ENCODE measurements at regions of chr10 and their contacts with region 1.

Region 1: DNA sequence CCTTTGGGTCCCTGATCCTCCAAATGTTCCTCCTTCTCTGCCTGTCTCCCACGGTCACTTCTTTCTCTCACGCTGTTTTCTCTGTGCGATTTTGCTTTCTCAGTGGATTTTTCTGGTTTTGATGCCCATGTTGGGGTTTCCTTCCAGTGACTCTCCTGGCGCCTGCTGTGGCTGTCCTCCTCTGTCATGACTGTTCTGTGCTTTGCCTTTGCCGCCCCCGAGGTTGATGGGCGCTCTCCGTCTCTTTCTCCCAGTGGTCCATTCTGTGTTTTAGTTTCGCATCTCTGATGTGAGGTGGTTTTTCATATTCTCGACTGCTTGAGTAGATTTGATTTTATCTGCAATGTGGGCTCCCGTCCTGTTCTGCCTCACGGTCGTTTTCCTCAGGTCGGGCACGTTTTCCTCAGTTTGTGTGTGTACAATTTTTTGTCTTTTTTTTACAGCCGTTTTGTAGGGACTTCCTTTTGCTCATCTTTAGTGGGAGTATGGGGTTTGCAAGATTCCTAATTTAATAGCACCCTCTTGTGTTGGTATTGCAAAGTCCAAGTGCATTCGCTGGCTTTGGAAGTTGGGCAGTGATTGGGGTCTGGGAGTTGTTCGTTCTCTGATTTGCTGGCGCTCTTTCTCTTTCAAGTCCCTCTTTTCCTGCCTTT is 100.0 kb downstream of the INPP5A start:
- DNase-seq: peak in 1 of 2 donors; percentile 72
- ATAC-seq: peak; percentile 65 to 84 (median 79)
- H3K4me3 ChIP-seq: no peak overlapping the region
- H3K4me3 Mint-ChIP-seq: no peak overlapping the region
- H3K27ac ChIP-seq: no peak overlapping the region
- H3K27ac Mint-ChIP-seq: no peak overlapping the region
- H3K4me1 ChIP-seq: no peaks in the 10 kb centered on the region
- H3K4me1 Mint-ChIP-seq: peaks cover 14 to 21% of the 10 kb centered on the region in 2 donors
- H3K27me3 ChIP-seq: no peaks in the 10 kb centered on the region
- H3K27me3 Mint-ChIP-seq: peaks cover 0 to 19% of the 10 kb centered on the region in 2 donors
- CTCF ChIP-seq: peak; percentile 66

Region 2: GRCh38 chr10:132387764-132388210 is 249.8 kb before region 1 on chr10:
- intact Hi-C with region 1: loop called (anchors 10 kb)
- DNase-seq: peak; percentile 84 to 90
- ATAC-seq: peak; percentile 86 to 90 (median 87)
- H3K4me3 ChIP-seq: no peak overlapping the region
- H3K4me3 Mint-ChIP-seq: peak overlapping the region; percentile 58
- H3K27ac ChIP-seq: no peak overlapping the region
- H3K27ac Mint-ChIP-seq: peak overlapping the region; percentile 7 to 56
- H3K4me1 ChIP-seq: peaks cover 14% of the 10 kb centered on the region
- H3K4me1 Mint-ChIP-seq: peaks cover 6 to 22% of the 10 kb centered on the region in 2 donors
- H3K27me3 ChIP-seq: no peaks in the 10 kb centered on the region
- H3K27me3 Mint-ChIP-seq: no peaks in the 10 kb centered on the region
- CTCF ChIP-seq: peak; percentile 51

Region 3: DNA sequence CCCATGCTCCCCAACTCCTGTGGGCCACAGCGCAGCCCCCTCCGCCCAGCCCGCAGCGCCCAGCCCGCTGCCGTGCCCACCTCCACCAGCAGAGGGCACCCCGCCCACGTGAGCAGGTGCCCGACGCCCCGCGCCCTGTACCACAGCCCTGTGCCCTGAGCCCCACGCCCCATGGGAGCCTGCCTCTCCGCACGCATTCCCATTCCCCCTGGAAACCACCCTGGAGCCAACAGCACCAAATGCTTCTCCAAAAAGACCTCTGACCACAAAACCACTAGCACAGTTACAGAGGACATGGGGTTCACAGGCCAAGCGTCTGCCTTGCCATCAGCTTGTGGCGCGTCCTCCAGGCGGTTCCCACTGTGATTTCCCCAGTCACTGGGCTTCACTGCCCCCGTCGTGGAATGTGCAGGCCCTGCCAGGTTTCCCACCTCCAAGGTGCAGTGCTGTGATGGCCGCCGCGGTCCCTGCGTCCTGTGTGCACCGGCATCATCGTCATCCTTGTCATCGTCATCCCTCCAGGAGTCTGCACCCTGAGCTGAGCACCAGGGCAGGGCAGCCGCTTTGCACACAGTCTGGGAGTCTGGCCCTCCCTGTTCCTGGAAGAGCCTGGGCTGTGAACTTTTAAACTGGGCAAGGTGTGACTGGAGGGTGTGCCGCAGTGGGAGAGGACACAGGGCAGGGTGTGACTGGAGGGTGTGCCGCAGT is 178.9 kb before region 1 on chr10:
- intact Hi-C with region 1: loop called (anchors 1 kb)
- DNase-seq: peak; percentile 73 to 80
- ATAC-seq: peak; percentile 78 to 97 (median 93)
- H3K4me3 ChIP-seq: no peak overlapping the region
- H3K4me3 Mint-ChIP-seq: no peak overlapping the region
- H3K27ac ChIP-seq: no peak overlapping the region
- H3K27ac Mint-ChIP-seq: no peak overlapping the region
- H3K4me1 ChIP-seq: peaks cover 8% of the 10 kb centered on the region
- H3K4me1 Mint-ChIP-seq: peaks cover 0 to 8% of the 10 kb centered on the region in 2 donors
- H3K27me3 ChIP-seq: no peaks in the 10 kb centered on the region
- H3K27me3 Mint-ChIP-seq: no peaks in the 10 kb centered on the region
- CTCF ChIP-seq: peak; percentile 84

Region 4: DNA sequence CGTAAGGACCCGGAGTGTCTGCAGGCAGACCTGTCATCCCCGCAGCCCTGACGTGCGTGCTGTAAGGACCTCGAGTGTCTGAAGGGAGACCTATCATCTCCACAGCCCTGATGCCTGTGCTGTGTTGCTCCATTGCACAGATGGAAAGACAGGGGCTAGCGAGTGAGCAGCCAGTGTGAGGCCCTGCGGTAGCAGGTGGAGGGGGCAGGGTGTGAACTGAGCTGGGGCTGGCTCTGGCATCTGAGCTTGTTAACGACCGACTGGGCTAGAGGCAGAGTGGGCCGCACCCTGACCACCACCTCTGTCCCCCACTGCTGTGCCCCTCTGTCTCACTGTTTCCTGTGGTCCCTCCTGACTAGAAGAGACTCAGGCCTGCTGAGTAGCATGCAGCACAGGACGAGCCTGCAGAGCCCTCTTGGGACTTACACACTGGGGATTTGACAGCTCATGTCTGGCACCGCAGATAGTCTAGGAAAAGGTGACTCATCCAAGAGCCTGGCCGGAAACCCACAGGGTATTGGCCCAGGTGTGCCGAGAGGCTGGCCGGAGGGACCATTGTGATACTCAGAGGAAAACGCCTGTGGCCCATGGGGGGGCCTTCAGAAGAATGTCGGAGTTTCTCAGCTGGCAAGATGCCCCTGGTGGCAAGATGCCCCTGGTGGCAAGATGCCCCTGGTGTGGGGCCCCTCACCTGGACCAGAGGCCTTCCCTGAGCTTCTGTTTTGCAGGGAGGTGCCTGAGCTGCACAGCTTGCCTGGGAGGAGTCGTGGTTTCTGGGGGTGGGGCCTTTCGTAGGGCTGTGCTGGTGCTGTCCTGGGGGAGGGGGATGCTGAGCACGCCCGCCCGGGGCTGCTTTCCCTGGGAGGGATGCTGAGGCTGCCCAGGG is 65.7 kb before region 1 on chr10:
- intact Hi-C with region 1: no loop called
- DNase-seq: peak; percentile 48 to 50
- ATAC-seq: peak; percentile 42 to 60 (median 58)
- H3K4me3 ChIP-seq: no peak overlapping the region
- H3K4me3 Mint-ChIP-seq: no peak overlapping the region
- H3K27ac ChIP-seq: peak overlapping the region; percentile 68
- H3K27ac Mint-ChIP-seq: no peak overlapping the region
- H3K4me1 ChIP-seq: peaks cover 54% of the 10 kb centered on the region
- H3K4me1 Mint-ChIP-seq: peaks cover 5 to 18% of the 10 kb centered on the region in 2 donors
- H3K27me3 ChIP-seq: no peaks in the 10 kb centered on the region
- H3K27me3 Mint-ChIP-seq: no peaks in the 10 kb centered on the region
- CTCF ChIP-seq: peak; percentile 14

Region 5: DNA sequence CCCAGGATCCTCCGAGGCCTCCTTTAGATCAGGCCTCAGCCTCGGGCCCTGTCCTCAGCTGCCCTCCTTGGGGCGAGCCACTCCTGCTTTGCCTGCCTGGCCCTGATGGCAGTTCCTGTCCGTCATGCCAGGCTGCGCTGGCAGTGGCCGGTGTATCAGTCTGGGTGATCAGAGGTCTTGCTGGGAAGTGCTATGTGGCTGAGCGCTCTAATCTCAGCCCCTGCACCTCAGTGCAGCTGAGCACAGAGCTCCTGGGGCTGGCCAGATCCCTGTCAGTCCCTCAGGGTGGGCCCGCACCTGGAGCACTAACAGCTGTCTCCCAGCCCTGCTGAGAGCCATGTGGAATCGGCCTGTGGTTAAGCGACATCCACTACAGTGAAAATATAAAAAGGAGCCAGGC is 319.5 kb after region 1 on chr10:
- intact Hi-C with region 1: no loop called
- DNase-seq: no peak
- ATAC-seq: no peak
- H3K4me3 ChIP-seq: no peak overlapping the region
- H3K4me3 Mint-ChIP-seq: no peak overlapping the region
- H3K27ac ChIP-seq: no peak overlapping the region
- H3K27ac Mint-ChIP-seq: no peak overlapping the region
- H3K4me1 ChIP-seq: peaks cover 8% of the 10 kb centered on the region
- H3K4me1 Mint-ChIP-seq: peaks cover 3 to 4% of the 10 kb centered on the region in 2 donors
- H3K27me3 ChIP-seq: no peaks in the 10 kb centered on the region
- H3K27me3 Mint-ChIP-seq: peaks cover 10 to 12% of the 10 kb centered on the region in 2 donors
- CTCF ChIP-seq: no peak

Measured in natural killer cell (primary cell).